Gastrocnemius medialis (tissue), 4 donors: ENCODE measurements at regions of chr7 and their contacts with region 1.

Region 1: GRCh38 chr7:1758028-1758858 is 88.2 kb downstream of the ELFN1 start:
- DNase-seq: no peak
- ATAC-seq: peak; percentile 79 to 82
- H3K4me3 ChIP-seq: no peak overlapping the region
- H3K27ac ChIP-seq: no peak overlapping the region
- H3K4me1 ChIP-seq: peaks cover 6% of the 10 kb centered on the region in 2 donors
- H3K27me3 ChIP-seq: peaks cover 10 to 27% (median 11%) of the 10 kb centered on the region in 3 donors
- CTCF ChIP-seq: peak; percentile 15 to 72 (median 51)
- POLR2A ChIP-seq: no peak

Region 2: DNA sequence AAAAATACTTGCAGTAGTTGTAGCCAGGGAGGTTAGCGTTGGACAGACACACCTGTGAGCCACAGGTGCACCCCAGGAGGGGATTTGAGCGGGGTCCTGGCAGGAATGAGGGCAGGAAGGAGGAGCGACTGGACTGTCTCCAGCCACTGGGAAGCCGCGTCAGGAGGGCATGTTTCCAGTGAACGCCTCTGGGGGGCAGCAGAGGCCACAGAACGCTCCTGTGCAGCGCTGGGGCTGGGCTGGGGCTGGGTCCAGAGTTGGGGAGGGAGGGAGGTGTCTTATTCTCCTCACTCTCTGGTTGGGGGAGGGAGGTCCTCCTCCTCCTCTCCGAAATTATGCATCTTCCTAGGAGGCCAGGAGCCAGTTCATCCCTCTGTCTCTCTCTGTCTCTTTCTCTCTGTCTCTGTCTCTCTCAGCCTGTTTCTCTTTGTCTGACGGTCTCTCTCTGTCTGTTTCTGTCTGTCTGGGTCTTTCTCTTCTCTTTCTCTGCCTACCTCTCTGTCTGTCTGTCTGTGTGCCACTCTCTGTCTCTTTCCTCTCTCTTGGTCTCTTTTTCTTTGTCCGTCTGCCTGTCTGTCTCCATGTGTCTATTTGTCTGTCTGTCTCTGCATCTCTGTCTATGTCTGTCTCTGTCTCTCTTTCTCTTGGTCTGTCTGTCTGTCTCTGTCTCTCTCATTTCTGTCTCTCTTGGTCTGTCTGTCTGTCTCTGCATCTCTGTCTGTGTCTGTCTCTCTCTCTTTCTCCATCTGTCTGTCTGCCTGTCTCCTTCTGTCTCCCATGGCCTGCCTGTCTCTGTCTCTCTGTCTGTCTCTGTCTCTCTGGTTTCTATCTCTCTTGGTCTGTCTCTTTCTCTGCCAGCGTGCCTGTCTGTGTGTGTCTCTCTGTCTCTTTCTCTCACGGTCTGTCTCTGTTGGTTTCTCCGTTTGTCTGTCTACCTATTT is 178.5 kb before region 1 on chr7:
- in situ Hi-C with region 1: loop called in 2 of 4 experiments (anchors 25 kb)
- intact Hi-C with region 1: loop called (anchors 1 kb)
- DNase-seq: peak; percentile 34 to 54
- ATAC-seq: peak; percentile 79 to 93
- H3K4me3 ChIP-seq: no peak overlapping the region
- H3K27ac ChIP-seq: no peak overlapping the region
- H3K4me1 ChIP-seq: no peaks in the 10 kb centered on the region
- H3K27me3 ChIP-seq: no peaks in the 10 kb centered on the region
- CTCF ChIP-seq: peak; percentile 72 to 93 (median 85)
- POLR2A ChIP-seq: no peak

Region 3: DNA sequence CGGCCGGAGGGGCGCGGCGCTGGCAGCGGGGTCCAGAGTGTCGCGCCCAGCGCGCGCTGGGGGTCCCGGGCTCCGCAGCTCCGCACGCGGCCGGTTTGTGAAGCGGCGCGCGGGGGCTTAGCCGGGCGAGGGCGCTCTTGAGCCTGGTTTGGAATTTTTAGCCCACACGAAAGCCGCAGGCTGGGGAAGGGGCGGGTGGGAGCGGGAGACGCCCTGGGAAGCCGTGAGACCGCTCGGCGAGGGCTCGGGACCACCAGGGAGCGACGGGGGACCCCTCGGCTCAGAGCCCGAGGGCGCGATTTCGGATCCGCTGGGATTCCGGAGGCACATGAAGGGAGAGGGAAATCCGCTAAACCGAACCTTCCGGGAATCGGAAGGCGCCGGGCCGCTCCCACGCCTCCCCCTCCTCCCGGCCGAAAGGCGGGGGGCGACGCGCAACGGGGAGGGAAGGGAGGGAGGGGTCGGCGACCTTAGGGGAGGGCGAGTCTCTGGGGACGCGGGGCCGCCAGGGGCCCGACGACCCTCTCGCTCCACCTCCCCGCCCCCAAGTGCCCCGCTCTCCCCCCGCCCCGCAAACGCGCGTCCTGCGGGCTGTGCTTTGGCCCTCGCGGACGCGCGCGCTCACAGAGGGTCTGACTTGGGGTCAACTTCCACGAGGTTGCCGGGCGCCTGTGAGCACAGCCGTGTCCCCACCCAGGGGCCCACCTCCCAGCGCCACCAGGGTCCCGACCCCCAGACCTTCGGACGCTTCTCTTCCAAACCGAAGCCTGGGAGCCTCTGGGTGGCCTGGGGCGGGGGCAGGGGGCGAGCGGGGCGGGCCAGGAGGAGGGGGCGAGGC is 93.3 kb before region 1 on chr7:
- in situ Hi-C with region 1: no loop called
- intact Hi-C with region 1: loop called (anchors 1 kb)
- DNase-seq: peak in 1 of 2 donors; percentile 17
- ATAC-seq: peak; percentile 39 to 51
- H3K4me3 ChIP-seq: peak overlapping the region; percentile 59 to 80 (median 63)
- H3K27ac ChIP-seq: peak overlapping the region; percentile 5 to 42 (median 28)
- H3K4me1 ChIP-seq: peaks cover 0 to 26% of the 10 kb centered on the region in 2 donors
- H3K27me3 ChIP-seq: peaks cover 35 to 61% (median 57%) of the 10 kb centered on the region in 3 donors
- CTCF ChIP-seq: peak; percentile 42 to 85 (median 73)
- POLR2A ChIP-seq: no peak

Region 4: DNA sequence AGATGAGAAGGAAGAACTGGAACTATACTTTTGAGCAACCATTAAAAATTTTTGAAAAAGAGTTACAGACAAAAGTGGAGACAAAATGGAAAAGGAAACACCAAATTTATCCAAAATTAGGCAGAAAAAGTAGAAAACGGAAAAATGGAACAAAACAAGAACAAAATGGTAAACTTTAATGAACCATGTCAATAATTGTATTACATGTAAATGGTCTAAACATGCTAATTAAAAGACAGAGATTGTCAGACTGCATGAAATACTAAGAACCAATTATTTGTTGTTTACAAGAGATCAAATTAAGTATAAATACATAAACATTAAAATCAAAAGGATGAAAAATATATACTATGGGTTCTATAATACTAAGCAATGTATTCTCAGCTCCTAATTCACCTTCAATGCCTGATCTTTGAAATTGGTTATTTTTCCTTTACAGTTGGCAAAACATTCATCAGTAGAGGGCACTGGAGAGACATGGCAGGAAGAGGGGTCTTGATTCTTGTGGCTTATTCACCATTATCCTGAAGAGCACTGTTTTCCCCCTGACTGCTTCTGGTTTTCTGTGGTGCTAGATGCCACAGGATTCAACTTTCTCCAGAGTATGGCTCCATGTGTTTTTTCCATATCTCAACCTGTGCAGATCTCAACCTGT is 36.8 kb after region 1 on chr7:
- in situ Hi-C with region 1: no loop called
- intact Hi-C with region 1: no loop called
- DNase-seq: no peak
- ATAC-seq: no peak
- H3K4me3 ChIP-seq: no peak overlapping the region
- H3K27ac ChIP-seq: no peak overlapping the region
- H3K4me1 ChIP-seq: no peaks in the 10 kb centered on the region
- H3K27me3 ChIP-seq: peaks cover 4 to 7% (median 5%) of the 10 kb centered on the region in 3 donors
- CTCF ChIP-seq: no peak
- POLR2A ChIP-seq: no peak

Region 5: DNA sequence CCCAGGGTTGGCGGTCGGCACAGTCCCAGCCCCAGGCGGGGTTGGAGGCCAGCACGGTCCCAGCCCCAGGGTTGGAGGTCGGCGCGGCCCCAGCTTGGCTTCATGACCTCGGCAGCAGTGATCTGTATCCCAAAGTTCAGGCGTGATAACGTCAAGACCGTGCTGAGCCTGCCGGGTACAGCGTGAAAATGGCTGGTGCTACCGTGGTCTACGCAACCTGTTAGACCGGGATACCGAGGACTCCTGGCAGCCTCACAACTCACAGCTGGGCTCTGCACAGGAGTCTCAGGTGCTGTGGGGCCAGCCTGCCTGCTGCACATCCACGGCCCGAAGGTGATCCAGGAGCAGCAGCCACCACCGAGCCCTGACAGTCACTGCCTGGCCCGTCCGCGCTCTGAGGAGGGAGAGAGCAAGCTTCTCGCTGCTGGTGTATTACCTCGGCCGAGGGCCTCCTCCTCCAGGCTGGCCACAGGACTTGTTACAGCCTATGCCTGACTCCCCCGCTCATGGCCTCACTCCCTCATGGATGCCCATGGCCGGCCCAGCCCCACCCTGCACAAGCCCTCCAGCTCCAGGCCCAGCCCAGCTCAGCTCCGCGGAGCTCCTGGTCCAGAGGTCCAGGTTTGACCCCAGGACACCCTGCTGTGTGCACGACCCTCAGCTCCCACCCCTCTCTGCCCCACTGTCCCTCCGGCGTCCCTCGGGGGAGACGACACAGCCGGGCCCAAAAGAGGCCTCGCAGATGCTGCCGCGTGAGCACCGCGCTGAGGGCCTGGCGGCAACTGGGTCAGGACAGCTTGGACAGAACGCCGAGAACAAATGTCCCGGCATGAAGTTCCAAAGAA is 67.9 kb after region 1 on chr7:
- in situ Hi-C with region 1: no loop called
- intact Hi-C with region 1: no loop called
- DNase-seq: no peak
- ATAC-seq: no peak
- H3K4me3 ChIP-seq: no peak overlapping the region
- H3K27ac ChIP-seq: no peak overlapping the region
- H3K4me1 ChIP-seq: no peaks in the 10 kb centered on the region
- H3K27me3 ChIP-seq: no peaks in the 10 kb centered on the region
- CTCF ChIP-seq: no peak
- POLR2A ChIP-seq: no peak

Region 6: GRCh38 chr7:1889556-1890181 is 131.4 kb after region 1 on chr7:
- in situ Hi-C with region 1: no loop called
- intact Hi-C with region 1: no loop called
- DNase-seq: no peak
- ATAC-seq: no peak
- H3K4me3 ChIP-seq: no peak overlapping the region
- H3K27ac ChIP-seq: no peak overlapping the region
- H3K4me1 ChIP-seq: peaks cover 2 to 10% of the 10 kb centered on the region in 2 donors
- H3K27me3 ChIP-seq: no peaks in the 10 kb centered on the region
- CTCF ChIP-seq: no peak
- POLR2A ChIP-seq: no peak